ENCODE measurements at regions of chr5 and their contacts with region 1.

Region 1: GRCh38 chr5:174793684-174794328 is 69.4 kb downstream of the MSX2 start:
- DNase-seq: peak; percentile 83
- H3K4me3 Mint-ChIP-seq: no peak overlapping the region
- H3K27ac Mint-ChIP-seq: no peak overlapping the region
- H3K4me1 Mint-ChIP-seq: no peaks in the 10 kb centered on the region
- H3K27me3 Mint-ChIP-seq: peaks cover 33% of the 10 kb centered on the region
- CTCF ChIP-seq: peak; percentile 89

Region 2: DNA sequence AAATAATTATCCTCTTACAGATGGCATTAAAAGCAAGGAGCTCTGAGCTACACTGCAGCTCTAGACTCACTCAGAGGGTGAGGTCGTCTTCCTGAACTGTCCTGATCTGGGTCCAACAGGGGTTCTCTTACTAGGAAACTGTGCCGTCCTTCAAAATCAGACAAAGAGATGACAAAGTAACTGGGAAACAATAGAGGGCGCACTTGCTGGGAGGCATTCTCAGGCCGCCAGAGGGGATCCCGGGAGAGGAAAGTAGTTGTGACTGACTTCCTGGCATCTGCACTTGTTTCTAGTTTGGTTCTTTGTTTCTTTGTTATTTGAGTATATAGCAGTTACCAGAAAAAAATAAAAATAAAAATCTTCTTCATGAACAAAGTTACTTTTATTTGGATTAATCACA is 212.3 kb before region 1 on chr5:
- CTCF ChIA-PET with region 1: no interaction called
- intact Hi-C with region 1: loop called (anchors 5 kb)
- DNase-seq: peak; percentile 69
- H3K4me3 Mint-ChIP-seq: no peak overlapping the region
- H3K27ac Mint-ChIP-seq: no peak overlapping the region
- H3K4me1 Mint-ChIP-seq: peaks cover 8% of the 10 kb centered on the region
- H3K27me3 Mint-ChIP-seq: no peaks in the 10 kb centered on the region
- CTCF ChIP-seq: peak; percentile 35

Region 3: GRCh38 chr5:174741352-174741751 is 52.5 kb before region 1 on chr5:
- CTCF ChIA-PET with region 1: no interaction called
- intact Hi-C with region 1: loop called (anchors 5 kb)
- DNase-seq: no peak
- H3K4me3 Mint-ChIP-seq: no peak overlapping the region
- H3K27ac Mint-ChIP-seq: peak overlapping the region; percentile 27
- H3K4me1 Mint-ChIP-seq: peaks cover 12% of the 10 kb centered on the region
- H3K27me3 Mint-ChIP-seq: peaks cover 30% of the 10 kb centered on the region
- CTCF ChIP-seq: no peak

Region 4: GRCh38 chr5:174903172-174903733 is 109.4 kb after region 1 on chr5:
- CTCF ChIA-PET with region 1: no interaction called
- intact Hi-C with region 1: no loop called
- DNase-seq: no peak
- H3K4me3 Mint-ChIP-seq: no peak overlapping the region
- H3K27ac Mint-ChIP-seq: no peak overlapping the region
- H3K4me1 Mint-ChIP-seq: no peaks in the 10 kb centered on the region
- H3K27me3 Mint-ChIP-seq: peaks cover 29% of the 10 kb centered on the region
- CTCF ChIP-seq: no peak

Region 5: GRCh38 chr5:174972291-174972690 is 178.5 kb after region 1 on chr5:
- CTCF ChIA-PET with region 1: no interaction called
- intact Hi-C with region 1: no loop called
- DNase-seq: no peak
- H3K4me3 Mint-ChIP-seq: no peak overlapping the region
- H3K27ac Mint-ChIP-seq: no peak overlapping the region
- H3K4me1 Mint-ChIP-seq: peaks cover 8% of the 10 kb centered on the region
- H3K27me3 Mint-ChIP-seq: no peaks in the 10 kb centered on the region
- CTCF ChIP-seq: no peak